B cell (primary cell): ENCODE measurements at regions of chr5 and their contacts with region 1.

Region 1: DNA sequence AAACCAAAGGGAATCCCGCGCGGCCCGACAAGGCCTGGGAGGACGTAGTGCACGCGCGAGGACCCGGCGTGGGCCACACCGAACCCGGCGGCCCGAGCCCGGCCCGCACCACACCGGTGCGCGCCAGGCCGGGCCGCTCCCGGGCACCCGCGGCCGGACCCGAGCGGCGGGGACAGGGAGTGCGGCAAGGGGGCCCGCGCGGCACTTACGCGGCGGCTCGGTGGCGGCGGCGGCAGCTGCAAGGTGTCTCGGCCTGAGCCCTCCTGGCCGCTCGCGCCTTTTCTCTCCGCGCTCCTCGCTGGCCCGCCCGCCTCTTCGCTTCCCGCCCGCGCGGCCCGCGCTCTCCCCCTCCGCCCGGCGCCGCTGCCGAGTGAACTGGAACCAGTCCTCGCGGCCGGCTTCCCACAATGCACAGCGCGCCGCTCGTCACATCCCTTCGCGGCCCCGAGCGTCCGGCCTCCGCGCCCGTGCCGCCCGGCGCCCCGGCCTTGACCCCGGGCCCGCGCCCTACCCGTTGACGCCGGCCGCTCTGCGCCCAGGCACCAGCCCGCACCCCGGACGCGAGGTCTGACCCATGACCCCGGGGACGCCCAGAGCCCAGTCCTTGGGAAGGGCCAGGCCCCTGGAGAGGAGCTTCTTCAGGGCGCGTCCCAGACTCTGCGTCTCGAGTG is at the start of gene MACROH2A1:
- DNase-seq: peak; percentile 90
- ATAC-seq: peak; percentile 91
- H3K4me3 ChIP-seq: peak within 1 kb of the TSS; percentile 61 to 80 (median 72)
- H3K4me3 Mint-ChIP-seq: peak within 1 kb of the TSS; percentile 92
- H3K27ac ChIP-seq: peak within 1 kb of the TSS; percentile 81 to 92
- H3K27ac Mint-ChIP-seq: peak within 1 kb of the TSS; percentile 92
- H3K4me1 ChIP-seq: peaks cover 30 to 36% of the 10 kb centered on the region in 2 donors
- H3K4me1 Mint-ChIP-seq: peaks cover 50% of the 10 kb centered on the region
- H3K27me3 ChIP-seq: no peaks in the 10 kb centered on the region
- H3K27me3 Mint-ChIP-seq: no peaks in the 10 kb centered on the region
- CTCF ChIP-seq: no peak
- total RNA-seq, gene MACROH2A1: 99.7 and 100.0 TPM in 2 replicates

Region 2: GRCh38 chr5:135139381-135140137 is 259.4 kb before region 1 on chr5:
- CTCF ChIA-PET with region 1: no interaction called
- POLR2A ChIA-PET with region 1: no interaction called
- intact Hi-C with region 1: no loop called
- DNase-seq: no peak
- ATAC-seq: no peak
- H3K4me3 ChIP-seq: no peak overlapping the region
- H3K4me3 Mint-ChIP-seq: no peak overlapping the region
- H3K27ac ChIP-seq: no peak overlapping the region
- H3K27ac Mint-ChIP-seq: no peak overlapping the region
- H3K4me1 ChIP-seq: peaks cover 8 to 10% of the 10 kb centered on the region in 2 donors
- H3K4me1 Mint-ChIP-seq: peaks cover 13% of the 10 kb centered on the region
- H3K27me3 ChIP-seq: peaks cover 0 to 12% (median 0%) of the 10 kb centered on the region in 4 experiments
- H3K27me3 Mint-ChIP-seq: peaks cover 29% of the 10 kb centered on the region
- CTCF ChIP-seq: no peak

Region 3: DNA sequence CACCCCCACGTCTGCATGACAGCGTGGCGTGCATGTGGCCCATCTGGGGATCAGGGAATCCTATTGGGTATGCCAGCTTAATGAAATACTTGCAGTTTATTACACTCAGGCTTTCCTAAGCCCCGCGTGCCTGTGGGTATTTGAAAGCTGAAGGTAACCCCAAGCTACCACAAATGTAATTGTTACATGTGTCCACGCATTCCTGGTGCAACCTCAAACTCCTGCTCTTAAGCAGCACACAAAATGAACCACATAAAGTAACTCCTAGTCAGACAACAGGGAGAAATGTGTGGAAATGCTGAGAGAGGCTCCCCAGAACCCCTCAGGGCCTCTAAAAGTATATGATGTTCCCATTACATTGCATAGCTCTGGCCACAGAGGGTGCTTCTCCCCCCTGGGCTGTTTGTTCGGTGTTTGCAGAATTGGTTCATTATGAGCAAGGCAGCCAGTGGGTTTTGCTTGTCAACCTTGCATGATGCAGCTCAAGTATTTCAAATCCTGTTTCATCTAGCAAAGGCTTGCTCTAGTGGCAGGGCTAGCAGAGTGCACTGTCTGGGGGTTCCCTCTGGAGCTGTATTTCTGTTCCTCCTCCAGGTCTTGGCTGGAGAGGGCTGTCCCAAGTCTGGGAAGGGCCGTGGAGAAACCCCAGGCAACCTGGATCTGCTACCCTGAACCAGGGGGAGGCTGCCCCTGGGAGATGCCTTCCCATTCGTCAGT is 50.0 kb after region 1 on chr5:
- CTCF ChIA-PET with region 1: no interaction called
- POLR2A ChIA-PET with region 1: no interaction called
- intact Hi-C with region 1: no loop called
- DNase-seq: no peak
- ATAC-seq: no peak
- H3K4me3 ChIP-seq: no peak overlapping the region
- H3K4me3 Mint-ChIP-seq: no peak overlapping the region
- H3K27ac ChIP-seq: no peak overlapping the region
- H3K27ac Mint-ChIP-seq: no peak overlapping the region
- H3K4me1 ChIP-seq: no peaks in the 10 kb centered on the region
- H3K4me1 Mint-ChIP-seq: peaks cover 2% of the 10 kb centered on the region
- H3K27me3 ChIP-seq: peaks cover 0 to 6% (median 0%) of the 10 kb centered on the region in 4 experiments
- H3K27me3 Mint-ChIP-seq: peaks cover 35% of the 10 kb centered on the region
- CTCF ChIP-seq: no peak

Region 4: GRCh38 chr5:136132557-136133221 is 733.7 kb after region 1 on chr5 and contains the start of gene SMAD5:
- CTCF ChIA-PET with region 1: no interaction called
- POLR2A ChIA-PET with region 1: no interaction called
- intact Hi-C with region 1: loop called (anchors 5 kb)
- DNase-seq: peak; percentile 88
- ATAC-seq: peak; percentile 87
- H3K4me3 ChIP-seq: peak within 1 kb of the TSS; percentile 60 to 92 (median 76)
- H3K4me3 Mint-ChIP-seq: peak within 1 kb of the TSS; percentile 98
- H3K27ac ChIP-seq: peak within 1 kb of the TSS; percentile 28 to 83
- H3K27ac Mint-ChIP-seq: peak within 1 kb of the TSS; percentile 95
- H3K4me1 ChIP-seq: peaks cover 10 to 17% of the 10 kb centered on the region in 2 donors
- H3K4me1 Mint-ChIP-seq: peaks cover 32% of the 10 kb centered on the region
- H3K27me3 ChIP-seq: peaks cover 0 to 9% (median 2%) of the 10 kb centered on the region in 4 experiments
- H3K27me3 Mint-ChIP-seq: peaks cover 10% of the 10 kb centered on the region
- CTCF ChIP-seq: no peak
- total RNA-seq, gene SMAD5: 38.6 and 43.1 TPM in 2 replicates